Mammary epithelial cell (primary cell): ENCODE measurements at regions of chr6 and their contacts with region 1.

Region 1: GRCh38 chr6:79466207-79466834 is 70.9 kb downstream of the LCA5 start:
- DNase-seq: peak; percentile 19
- H3K4me3 ChIP-seq: no peak overlapping the region
- H3K27ac ChIP-seq: no peak overlapping the region
- H3K4me1 ChIP-seq: peaks cover 14% of the 10 kb centered on the region
- H3K27me3 ChIP-seq: no peaks in the 10 kb centered on the region
- CTCF ChIP-seq: peak; percentile 62 to 64

Region 2: DNA sequence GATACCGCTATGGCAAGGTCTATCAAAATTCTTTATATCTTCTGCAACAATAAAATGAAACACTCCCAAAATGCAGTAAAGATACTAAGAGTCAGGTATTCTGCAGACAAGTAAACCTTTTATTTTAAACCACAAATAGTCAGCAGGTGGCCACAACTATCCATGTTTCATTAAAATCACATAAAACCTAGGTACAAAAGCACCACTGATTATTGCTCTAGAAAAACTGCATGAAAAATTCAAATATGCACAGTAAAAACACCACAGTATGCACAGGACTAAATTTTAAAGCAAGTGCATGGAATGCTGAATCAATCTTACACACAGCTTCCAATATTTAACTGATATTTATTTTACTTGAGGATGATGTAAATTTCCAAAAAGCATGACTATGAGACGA is 265.2 kb before region 1 on chr6:
- CTCF ChIA-PET with region 1: no interaction called
- dilution Hi-C with region 1: no loop called
- in situ Hi-C with region 1: no loop called
- intact Hi-C with region 1: loop called (anchors 2 kb)
- DNase-seq: no peak
- H3K4me3 ChIP-seq: no peak overlapping the region
- H3K27ac ChIP-seq: no peak overlapping the region
- H3K4me1 ChIP-seq: no peaks in the 10 kb centered on the region
- H3K27me3 ChIP-seq: no peaks in the 10 kb centered on the region
- CTCF ChIP-seq: peak in 1 of 2 donors; percentile 7

Region 3: GRCh38 chr6:79233611-79234149 is 232.6 kb before region 1 on chr6:
- CTCF ChIA-PET with region 1: no interaction called
- dilution Hi-C with region 1: no loop called
- in situ Hi-C with region 1: no loop called
- intact Hi-C with region 1: loop called (anchors 10 kb)
- DNase-seq: peak; percentile 88
- H3K4me3 ChIP-seq: peak overlapping the region; percentile 74 to 85 (median 76)
- H3K27ac ChIP-seq: peak overlapping the region; percentile 70
- H3K4me1 ChIP-seq: peaks cover 3% of the 10 kb centered on the region
- H3K27me3 ChIP-seq: no peaks in the 10 kb centered on the region
- CTCF ChIP-seq: peak; percentile 30 to 42

Region 4: DNA sequence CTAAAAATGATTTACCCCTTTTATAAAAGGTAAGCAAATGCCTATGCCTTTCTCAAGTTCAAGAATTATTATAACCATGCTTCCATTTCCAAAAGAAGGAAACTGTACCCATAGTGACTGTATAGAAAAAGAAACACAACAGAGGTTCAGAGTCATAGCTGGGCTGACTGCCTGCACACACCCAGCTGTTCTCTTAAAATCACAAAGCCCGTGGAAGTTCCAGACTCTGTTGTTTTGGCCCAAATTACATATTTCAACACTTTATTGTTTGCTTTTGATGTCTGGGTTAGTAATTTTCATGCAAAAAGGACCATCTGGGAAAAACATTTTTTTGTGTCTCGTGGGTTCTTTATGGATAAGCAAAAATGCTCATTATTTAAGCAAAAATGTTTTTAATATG is 28.3 kb before region 1 on chr6:
- CTCF ChIA-PET with region 1: no interaction called
- dilution Hi-C with region 1: no loop called
- in situ Hi-C with region 1: no loop called
- intact Hi-C with region 1: no loop called
- DNase-seq: peak; percentile 19
- H3K4me3 ChIP-seq: no peak overlapping the region
- H3K27ac ChIP-seq: no peak overlapping the region
- H3K4me1 ChIP-seq: no peaks in the 10 kb centered on the region
- H3K27me3 ChIP-seq: no peaks in the 10 kb centered on the region
- CTCF ChIP-seq: no peak

Region 5: GRCh38 chr6:79512014-79512413 is 45.7 kb after region 1 on chr6:
- CTCF ChIA-PET with region 1: no interaction called
- dilution Hi-C with region 1: no loop called
- in situ Hi-C with region 1: no loop called
- intact Hi-C with region 1: no loop called
- DNase-seq: no peak
- H3K4me3 ChIP-seq: no peak overlapping the region
- H3K27ac ChIP-seq: no peak overlapping the region
- H3K4me1 ChIP-seq: no peaks in the 10 kb centered on the region
- H3K27me3 ChIP-seq: no peaks in the 10 kb centered on the region
- CTCF ChIP-seq: no peak

Region 6: DNA sequence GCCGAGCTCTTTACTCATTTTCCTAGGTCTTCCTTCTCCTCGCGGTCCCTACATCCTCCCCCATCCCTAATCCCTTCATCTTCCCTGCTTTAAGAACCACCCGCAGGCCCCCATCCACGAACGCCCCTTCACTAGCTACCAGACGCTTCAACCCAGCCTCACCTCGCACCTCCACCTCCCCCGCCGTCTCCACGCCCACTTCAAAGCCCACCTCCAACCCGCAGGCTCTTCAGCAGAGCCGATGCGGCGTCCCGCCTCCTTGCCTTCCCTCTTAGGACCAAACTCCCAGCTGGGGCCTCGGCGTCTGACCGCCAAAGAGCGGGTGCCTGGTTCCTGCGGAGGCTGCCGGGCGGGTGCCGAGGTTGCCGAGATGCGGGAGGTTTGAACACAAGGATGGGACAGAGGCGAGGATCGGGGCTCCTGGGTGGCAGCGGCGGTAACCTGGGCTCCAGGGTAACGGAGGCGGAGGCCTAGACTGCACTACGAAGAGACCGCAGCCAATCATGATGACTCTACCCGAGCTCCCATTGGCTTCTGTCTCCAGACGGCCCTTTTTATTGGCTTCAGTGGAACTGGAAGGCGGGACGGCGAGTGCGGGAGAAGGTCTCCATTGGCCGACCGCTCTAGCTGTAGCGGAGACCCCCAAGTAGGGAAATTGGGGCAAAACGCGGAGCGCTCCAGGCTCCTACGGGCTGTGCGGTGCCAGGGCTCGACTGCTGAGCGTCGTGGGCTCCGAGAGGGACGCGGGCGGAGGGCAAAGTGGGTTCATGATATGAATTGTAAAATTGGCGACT is 70.8 kb after region 1 on chr6 and contains the start of gene LCA5:
- CTCF ChIA-PET with region 1: no interaction called
- dilution Hi-C with region 1: no loop called
- in situ Hi-C with region 1: no loop called
- intact Hi-C with region 1: loop called (anchors 5 kb)
- DNase-seq: peak; percentile 98
- H3K4me3 ChIP-seq: peak within 1 kb of the TSS; percentile 95 to 98 (median 97)
- H3K27ac ChIP-seq: peak within 1 kb of the TSS; percentile 99
- H3K4me1 ChIP-seq: no peaks in the 10 kb centered on the region
- H3K27me3 ChIP-seq: no peaks in the 10 kb centered on the region
- CTCF ChIP-seq: no peak
- total RNA-seq, gene LCA5: 4.8 to 20.0 TPM

Region 7: DNA sequence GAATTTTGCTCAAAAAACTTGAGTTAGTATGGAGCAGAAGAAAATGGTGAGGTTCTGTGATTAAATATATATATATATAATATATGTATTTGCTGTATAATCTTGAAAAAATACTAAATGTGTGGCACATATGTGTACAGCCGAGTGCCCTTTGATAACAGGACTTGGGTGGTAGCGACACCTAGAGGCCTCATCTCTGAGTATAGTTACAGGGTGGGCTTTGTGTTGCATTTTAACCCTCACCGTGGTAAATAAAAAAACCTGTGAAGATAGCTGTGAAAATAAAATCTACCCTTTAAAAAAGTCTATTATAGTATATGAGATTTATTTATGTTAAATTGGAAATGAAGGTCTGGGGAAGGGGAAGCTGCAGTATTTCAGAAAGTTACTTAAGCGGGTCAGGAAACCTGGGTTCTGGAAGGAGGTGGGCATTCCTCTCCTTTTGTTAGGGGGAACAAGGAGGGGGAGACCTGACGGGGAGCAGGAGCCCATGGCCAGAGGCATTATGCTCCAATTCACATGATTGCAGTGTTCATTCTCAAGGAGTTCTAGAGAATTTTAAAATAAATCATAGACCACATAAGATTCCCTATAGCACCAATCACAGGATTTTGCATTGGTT is 247.5 kb after region 1 on chr6:
- CTCF ChIA-PET with region 1: interaction called, 4 read pairs
- dilution Hi-C with region 1: no loop called
- in situ Hi-C with region 1: no loop called
- intact Hi-C with region 1: loop called (anchors 2 kb)
- DNase-seq: peak; percentile 1
- H3K4me3 ChIP-seq: no peak overlapping the region
- H3K27ac ChIP-seq: no peak overlapping the region
- H3K4me1 ChIP-seq: no peaks in the 10 kb centered on the region
- H3K27me3 ChIP-seq: no peaks in the 10 kb centered on the region
- CTCF ChIP-seq: peak; percentile 32 to 57